Activated CD4-positive, alpha-beta T cell treated with anti-CD3 and anti-CD28 coated beads for 36 hours (primary cell): ENCODE measurements at regions of chr2 and their contacts with region 1.

Region 1: DNA sequence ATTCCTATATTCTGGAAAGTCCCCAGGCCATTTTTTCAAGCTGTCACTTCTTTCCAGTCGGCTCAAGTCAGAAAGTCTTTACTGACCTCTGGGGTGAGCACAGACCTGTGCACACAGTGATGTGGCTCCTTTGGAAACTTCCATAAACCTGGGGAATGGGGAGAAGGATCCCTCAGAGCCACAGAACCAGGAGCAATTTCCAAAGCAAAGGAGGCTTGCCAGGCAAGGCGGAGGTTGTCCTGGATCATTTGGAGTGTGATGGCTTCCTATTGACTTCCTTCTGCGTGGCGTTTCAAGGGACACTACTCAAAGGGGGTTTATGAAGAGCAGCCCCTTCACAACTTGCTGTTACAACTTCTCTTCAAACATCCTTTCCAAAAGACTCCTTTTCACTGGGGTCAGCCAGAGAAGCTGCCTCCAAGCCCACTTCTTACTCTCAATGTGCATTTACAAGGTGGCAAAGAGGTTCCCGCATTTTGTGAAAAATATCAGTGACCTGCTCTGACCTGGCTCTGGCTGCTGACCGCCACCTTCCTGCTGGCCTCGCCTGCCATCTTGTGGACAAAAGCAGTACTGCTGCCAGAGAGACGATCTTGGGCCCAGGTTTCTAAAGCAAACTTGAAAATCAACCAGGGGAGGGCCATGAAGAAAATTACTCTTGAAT is 18.2 kb upstream of the TMEM247 start:
- DNase-seq: peak; percentile 83
- ATAC-seq: peak; percentile 58
- H3K4me3 Mint-ChIP-seq: no peak overlapping the region
- H3K27ac Mint-ChIP-seq: peak overlapping the region; percentile 0
- H3K4me1 Mint-ChIP-seq: peaks cover 2% of the 10 kb centered on the region
- H3K27me3 Mint-ChIP-seq: peaks cover 2% of the 10 kb centered on the region

Region 2: GRCh38 chr2:45993476-45993991 is 467.6 kb before region 1 on chr2:
- CTCF ChIA-PET with region 1: no interaction called
- POLR2A ChIA-PET with region 1: no interaction called
- intact Hi-C with region 1: loop called (anchors 1 kb)
- DNase-seq: peak; percentile 76
- ATAC-seq: peak; percentile 85
- H3K4me3 Mint-ChIP-seq: no peak overlapping the region
- H3K27ac Mint-ChIP-seq: no peak overlapping the region
- H3K4me1 Mint-ChIP-seq: peaks cover 8% of the 10 kb centered on the region
- H3K27me3 Mint-ChIP-seq: no peaks in the 10 kb centered on the region

Region 3: DNA sequence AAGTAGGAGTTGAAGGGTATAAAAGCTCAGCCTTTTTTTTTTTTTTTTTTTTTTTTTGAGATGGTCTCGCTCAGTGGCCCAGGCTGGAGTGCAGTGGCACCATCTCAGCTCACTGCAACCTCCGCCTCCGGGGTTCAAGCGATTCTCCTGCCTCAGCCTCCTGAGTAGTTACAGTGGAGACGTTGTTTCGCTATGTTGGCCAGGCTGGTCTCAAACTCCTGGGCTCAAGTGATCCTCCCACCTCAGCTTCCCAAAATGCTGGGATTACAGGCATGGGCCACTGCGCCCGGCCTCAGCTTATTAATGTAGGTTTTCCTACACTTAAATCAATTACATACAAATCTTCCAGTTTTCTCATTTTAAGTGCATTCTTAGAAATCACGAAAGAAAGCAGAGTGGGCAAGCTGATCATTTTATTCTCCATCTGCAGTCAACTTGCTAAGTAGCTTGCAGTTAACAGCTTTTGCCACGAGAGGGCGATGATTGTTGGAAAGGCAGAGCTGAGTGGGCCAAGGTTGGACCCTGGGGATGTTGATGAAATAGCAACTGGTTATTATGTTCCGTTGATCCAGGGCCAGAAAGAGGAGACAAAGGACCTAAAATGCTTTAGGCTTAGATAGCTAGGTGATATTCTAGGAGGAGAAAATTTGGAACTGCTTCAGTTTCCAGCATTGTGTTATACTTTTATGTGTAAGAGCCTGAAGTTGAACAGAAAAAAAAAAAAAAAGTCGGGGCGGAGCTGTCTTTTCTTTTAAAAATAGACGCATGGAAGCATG is 398.3 kb before region 1 on chr2:
- CTCF ChIA-PET with region 1: interaction called, 11 read pairs
- POLR2A ChIA-PET with region 1: no interaction called
- intact Hi-C with region 1: loop called in 1 of 2 experiments (anchors 1 kb)
- DNase-seq: peak; percentile 85
- ATAC-seq: peak; percentile 52
- H3K4me3 Mint-ChIP-seq: no peak overlapping the region
- H3K27ac Mint-ChIP-seq: no peak overlapping the region
- H3K4me1 Mint-ChIP-seq: peaks cover 17% of the 10 kb centered on the region
- H3K27me3 Mint-ChIP-seq: no peaks in the 10 kb centered on the region

Region 4: DNA sequence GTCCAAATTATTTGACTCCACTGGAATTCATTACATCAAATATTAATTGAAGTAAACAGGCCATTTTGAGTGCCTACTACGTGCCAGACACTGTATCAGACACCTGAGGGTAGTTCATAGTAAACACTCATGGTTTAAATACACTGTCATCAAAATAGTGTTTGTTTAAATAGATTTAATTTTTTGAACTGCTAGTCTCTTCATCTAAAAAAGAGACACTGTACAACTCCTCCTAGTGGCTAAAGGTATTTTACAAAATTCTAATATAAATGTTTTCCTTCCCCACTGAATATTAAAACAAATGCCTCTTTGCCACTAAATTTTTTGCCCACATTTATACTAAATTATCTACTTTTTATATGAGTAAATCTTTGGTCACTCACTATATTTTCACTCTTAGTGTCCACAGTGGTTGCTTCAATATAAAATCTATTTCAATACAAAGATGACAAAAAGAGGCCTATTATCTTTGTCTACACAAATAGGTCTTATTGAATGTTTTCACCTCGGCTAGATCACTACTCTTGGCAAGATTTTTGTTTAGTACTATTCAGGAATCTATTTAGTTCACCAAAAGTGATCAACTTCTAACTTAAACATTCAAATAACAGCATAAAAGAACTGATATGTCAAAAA is 140.3 kb after region 1 on chr2:
- CTCF ChIA-PET with region 1: interaction called, 4 read pairs
- POLR2A ChIA-PET with region 1: no interaction called
- intact Hi-C with region 1: loop called in 1 of 2 experiments (anchors 1 kb)
- DNase-seq: no peak
- ATAC-seq: no peak
- H3K4me3 Mint-ChIP-seq: no peak overlapping the region
- H3K27ac Mint-ChIP-seq: no peak overlapping the region
- H3K4me1 Mint-ChIP-seq: no peaks in the 10 kb centered on the region
- H3K27me3 Mint-ChIP-seq: no peaks in the 10 kb centered on the region